ENCODE measurements at regions of chr6 and their contacts with region 1.

Region 1: GRCh38 chr6:139124887-139125672 is 9.8 kb upstream of the HECA start:
- DNase-seq: peak; percentile 77
- H3K4me3 Mint-ChIP-seq: peak overlapping the region; percentile 47
- H3K27ac Mint-ChIP-seq: peak overlapping the region; percentile 92
- H3K4me1 Mint-ChIP-seq: peaks cover 33% of the 10 kb centered on the region
- H3K27me3 Mint-ChIP-seq: no peaks in the 10 kb centered on the region

Region 2: DNA sequence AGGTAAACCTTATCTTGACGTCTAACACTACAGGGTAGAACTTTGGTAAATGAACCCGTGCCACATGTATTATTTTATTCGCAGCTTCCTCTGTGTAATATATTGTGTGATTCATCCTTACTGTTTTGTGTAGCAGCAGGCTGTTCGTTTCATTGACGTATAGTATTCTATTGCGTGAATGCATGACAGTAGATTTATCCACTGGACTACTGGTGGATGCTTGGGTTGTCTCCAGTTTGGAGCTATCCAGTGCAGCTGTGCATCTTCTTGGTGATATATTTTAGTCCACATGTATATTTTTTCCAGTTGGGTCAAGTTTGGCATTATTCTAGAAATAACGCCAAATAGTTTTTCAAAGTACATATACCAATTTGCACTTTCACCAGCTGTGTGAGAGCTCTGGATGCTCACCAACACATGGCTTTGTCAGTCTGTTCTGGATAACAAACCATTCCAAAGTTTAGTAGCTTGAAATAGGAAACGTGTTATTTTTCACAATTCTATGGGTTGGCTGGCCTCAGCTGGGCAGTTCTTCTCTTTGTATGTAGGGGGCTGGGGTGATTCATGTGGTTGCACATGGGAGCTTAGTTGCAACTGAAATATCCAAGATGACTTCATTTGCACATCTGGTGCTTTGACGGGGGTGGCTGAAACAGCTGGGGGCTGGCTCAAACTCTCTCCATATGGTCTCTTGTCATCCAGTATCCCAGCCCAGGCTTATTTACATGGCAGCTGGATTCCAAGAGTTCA is 319.9 kb before region 1 on chr6:
- intact Hi-C with region 1: no loop called
- DNase-seq: no peak
- H3K4me3 Mint-ChIP-seq: no peak overlapping the region
- H3K27ac Mint-ChIP-seq: no peak overlapping the region
- H3K4me1 Mint-ChIP-seq: peaks cover 4% of the 10 kb centered on the region
- H3K27me3 Mint-ChIP-seq: peaks cover 9% of the 10 kb centered on the region

Region 3: DNA sequence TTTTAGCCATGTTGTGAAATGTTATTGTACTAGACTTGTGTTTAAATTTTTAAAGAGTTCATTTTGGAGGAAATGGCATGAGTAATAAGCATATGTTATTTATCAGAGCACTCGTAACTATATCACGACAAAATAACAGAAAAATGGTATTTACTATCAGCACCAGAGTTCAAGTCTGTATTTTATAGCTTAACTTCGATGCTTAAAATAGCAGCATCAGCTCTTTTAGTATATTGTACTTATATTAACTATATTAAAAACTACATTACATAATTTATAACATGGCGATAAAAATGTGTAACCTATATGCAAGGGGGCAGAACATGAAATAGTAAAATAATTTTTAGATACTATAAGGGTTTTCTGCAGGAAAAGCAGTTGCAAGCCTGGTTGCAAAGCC is 43.6 kb before region 1 on chr6:
- intact Hi-C with region 1: no loop called
- DNase-seq: no peak
- H3K4me3 Mint-ChIP-seq: no peak overlapping the region
- H3K27ac Mint-ChIP-seq: no peak overlapping the region
- H3K4me1 Mint-ChIP-seq: no peaks in the 10 kb centered on the region
- H3K27me3 Mint-ChIP-seq: peaks cover 9% of the 10 kb centered on the region

Region 4: DNA sequence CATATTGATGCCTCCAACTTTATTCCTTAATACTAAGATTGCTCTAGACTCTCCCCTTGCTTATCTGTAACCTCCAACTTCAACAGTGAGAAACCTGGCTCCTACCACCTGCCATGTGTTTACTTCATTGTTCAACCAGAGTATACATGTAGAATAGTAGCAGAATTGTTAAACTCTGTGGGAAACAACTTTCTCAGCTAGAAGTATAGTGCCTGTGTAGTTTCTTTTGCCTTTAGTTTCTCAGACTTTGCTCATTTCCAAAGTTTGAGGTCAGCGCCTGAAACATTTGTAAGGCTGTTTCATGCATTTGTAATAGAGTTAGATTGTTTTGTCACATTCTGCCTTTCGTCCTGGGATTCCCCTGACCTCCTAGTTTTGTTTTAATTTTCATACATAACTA is 25.1 kb before region 1 on chr6:
- intact Hi-C with region 1: loop called (anchors 1 kb)
- DNase-seq: no peak
- H3K4me3 Mint-ChIP-seq: no peak overlapping the region
- H3K27ac Mint-ChIP-seq: peak overlapping the region; percentile 65
- H3K4me1 Mint-ChIP-seq: peaks cover 20% of the 10 kb centered on the region
- H3K27me3 Mint-ChIP-seq: no peaks in the 10 kb centered on the region

Region 5: DNA sequence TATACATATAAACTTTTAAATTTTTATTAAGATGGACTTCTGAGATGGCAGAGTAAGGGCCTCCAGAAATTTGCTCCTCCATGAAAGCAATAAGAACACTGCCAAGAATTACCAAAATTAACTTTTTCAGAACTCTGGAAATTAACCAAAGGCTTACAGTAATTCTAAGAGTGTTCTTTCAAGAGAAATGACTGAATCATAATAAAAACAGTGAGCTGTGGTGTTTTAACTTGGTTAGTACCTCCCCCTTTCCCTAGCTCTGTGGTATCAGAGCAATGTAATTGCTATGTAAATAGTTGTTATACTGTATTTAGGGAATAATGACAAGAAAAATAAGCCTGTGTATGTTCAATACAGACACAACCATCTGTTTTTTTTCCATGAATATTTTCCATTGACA is 28.8 kb after region 1 on chr6:
- intact Hi-C with region 1: loop called (anchors 1 kb)
- DNase-seq: no peak
- H3K4me3 Mint-ChIP-seq: peak overlapping the region; percentile 66
- H3K27ac Mint-ChIP-seq: peak overlapping the region; percentile 90
- H3K4me1 Mint-ChIP-seq: peaks cover 73% of the 10 kb centered on the region
- H3K27me3 Mint-ChIP-seq: no peaks in the 10 kb centered on the region

Region 6: GRCh38 chr6:139173172-139173571 is 48.1 kb after region 1 on chr6:
- intact Hi-C with region 1: loop called (anchors 2 kb)
- DNase-seq: no peak
- H3K4me3 Mint-ChIP-seq: no peak overlapping the region
- H3K27ac Mint-ChIP-seq: peak overlapping the region; percentile 82
- H3K4me1 Mint-ChIP-seq: peaks cover 82% of the 10 kb centered on the region
- H3K27me3 Mint-ChIP-seq: no peaks in the 10 kb centered on the region

Region 7: DNA sequence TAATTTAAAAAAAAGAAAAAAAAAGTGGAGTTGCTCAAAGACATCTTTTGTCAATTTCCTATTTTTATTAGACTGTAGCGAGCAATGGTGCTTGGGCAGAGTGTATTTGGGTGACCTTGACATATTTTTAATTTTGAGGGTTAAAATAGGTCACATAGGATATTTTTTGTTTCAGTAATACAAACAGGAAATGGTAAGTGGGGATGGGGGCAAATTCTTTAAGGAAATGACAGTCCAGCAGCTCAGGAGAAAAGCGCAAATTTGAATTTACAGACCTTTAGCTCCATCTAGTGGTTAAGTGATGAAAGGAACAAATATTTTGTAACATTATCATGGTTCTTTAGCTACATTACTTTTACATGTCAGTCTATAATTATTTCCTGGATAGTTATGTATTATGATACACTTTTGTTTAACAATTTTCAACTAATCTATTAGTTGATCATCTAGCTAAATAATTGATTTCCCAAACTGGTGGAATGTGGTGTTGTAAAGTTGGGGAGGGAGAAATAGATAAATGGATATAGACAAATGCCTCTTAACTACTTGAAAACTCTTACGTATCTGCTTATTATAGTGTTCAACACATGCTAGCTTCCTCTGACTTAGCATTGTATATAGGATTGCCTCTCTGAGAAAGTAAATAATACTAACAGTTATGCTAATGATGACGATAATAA is 239.4 kb after region 1 on chr6:
- intact Hi-C with region 1: loop called (anchors 1 kb)
- DNase-seq: no peak
- H3K4me3 Mint-ChIP-seq: no peak overlapping the region
- H3K27ac Mint-ChIP-seq: no peak overlapping the region
- H3K4me1 Mint-ChIP-seq: peaks cover 47% of the 10 kb centered on the region
- H3K27me3 Mint-ChIP-seq: peaks cover 4% of the 10 kb centered on the region

Measured in activated T-helper 1 cell treated with anti-CD3 and anti-CD28 coated beads, Interleukin-12 subunit alpha, Interleukin-12 subunit beta, Interleukin-2, Interleukin-4 antibody, amounts not matched to agents 30 ng/mL and 10 ng/mL and 1 ng/mL, durations not matched to agents 14 hours and 24 hours and 36 hours (primary cell).